WTC11 (cell line): ENCODE measurements at regions of chr6 and their contacts with region 1.

Region 1: DNA sequence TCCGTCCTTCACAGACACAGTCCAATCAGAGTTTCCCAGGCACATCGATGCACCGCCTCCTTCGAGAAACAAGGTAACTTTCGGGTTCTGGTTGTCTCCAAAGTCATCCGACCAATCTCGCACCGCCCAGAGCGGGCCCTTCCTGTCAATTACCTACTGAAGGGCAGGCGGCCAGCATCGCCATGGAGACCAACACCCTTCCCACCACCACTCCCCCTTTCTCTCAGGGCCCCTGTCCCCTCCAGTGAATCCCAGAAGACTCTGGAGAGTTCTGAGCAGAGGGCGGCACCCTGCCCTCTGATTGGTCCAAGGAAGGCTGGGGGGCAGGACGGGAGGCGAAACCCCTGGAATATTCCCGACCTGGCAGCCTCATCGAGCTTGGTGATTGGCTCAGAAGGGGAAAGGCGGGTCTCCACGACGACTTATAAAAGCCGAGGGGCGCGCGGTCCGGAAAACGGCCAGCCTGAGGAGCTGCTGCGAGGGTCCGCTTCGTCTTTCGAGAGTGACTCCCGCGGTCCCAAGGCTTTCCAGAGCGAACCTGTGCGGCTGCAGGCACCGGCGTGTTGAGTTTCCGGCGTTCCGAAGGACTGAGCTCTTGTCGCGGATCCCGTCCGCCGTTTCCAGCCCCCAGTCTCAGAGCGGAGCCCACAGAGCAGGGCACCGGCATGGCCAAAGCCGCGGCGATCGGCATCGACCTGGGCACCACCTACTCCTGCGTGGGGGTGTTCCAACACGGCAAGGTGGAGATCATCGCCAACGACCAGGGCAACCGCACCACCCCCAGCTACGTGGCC is at the start of gene HSPA1B:
- DNase-seq: peak; percentile 98
- ATAC-seq: peak; percentile 93
- H3K4me3 Mint-ChIP-seq: peak within 1 kb of the TSS; percentile 75
- H3K27ac Mint-ChIP-seq: peak within 1 kb of the TSS; percentile 99
- H3K4me1 Mint-ChIP-seq: peaks cover 44% of the 10 kb centered on the region
- H3K27me3 Mint-ChIP-seq: no peaks in the 10 kb centered on the region
- CTCF ChIP-seq: no peak
- total RNA-seq, gene HSPA1B: 75.3 to 105 TPM (median 96.4 TPM) in 3 replicates

Region 2: DNA sequence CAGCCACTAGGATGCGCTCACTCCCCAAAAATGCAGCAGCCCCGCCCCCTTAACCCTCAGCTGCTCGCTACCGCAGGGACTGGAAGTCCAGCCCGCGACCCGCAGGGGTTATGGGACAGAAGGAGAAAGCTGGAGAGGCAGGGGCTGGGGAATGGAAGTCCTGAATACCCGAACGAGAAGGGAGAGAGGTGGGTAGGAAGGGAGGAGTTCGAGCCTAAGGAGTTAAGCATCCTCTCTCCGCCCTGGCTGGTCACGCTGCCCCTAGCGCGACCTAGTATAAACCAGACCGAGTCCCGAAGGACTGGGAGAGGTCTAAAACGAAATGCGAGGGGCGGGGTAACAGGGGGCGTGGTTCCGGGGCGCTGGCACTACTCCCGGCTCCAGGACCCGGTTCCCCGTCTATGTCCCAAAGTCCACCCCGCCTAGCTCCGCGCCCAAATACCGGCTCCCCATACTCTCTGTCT is 97.9 kb before region 1 on chr6:
- CTCF ChIA-PET with region 1: interaction called, 16 read pairs
- POLR2A ChIA-PET with region 1: interaction called, 13 read pairs
- DNase-seq: peak; percentile 95
- ATAC-seq: peak; percentile 78
- H3K4me3 Mint-ChIP-seq: peak overlapping the region; percentile 93
- H3K27ac Mint-ChIP-seq: peak overlapping the region; percentile 99
- H3K4me1 Mint-ChIP-seq: peaks cover 21% of the 10 kb centered on the region
- H3K27me3 Mint-ChIP-seq: no peaks in the 10 kb centered on the region
- CTCF ChIP-seq: no peak; the same call in 1 of the 2 replicates

Region 3: DNA sequence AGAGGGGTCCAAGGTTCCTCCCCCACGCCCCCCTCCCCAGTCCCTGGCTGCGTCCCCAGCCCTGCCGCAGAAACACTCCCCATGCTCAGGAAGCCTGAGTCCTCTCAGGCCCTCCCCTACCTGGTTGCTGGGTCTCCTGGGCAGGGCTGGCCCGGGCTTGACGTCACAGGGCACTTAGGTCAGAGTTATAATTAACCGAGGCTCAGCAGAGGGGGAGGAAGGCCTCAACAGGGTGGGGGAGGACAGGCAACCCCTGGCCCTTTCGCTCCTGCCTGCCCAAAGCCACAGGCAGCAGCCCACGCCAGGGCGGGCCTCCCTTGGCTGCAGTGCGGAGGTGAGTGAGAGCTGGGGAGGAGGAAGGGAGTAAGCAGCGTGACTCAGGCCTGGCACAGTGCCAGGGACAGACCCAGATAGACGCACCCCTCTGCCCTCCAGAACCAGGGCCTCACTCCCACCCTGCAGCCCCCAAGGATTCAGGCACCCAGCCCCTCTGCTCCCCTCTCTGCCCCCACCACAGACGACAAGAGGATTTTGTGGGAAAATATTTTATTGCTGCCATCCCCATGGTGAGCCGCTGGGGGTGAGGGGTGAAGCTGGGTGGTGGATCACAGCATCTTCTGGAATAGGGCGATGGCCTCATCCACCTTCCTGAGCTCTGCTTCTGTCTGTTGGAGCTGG is 50.4 kb before region 1 on chr6 and contains the start of gene VWA7:
- CTCF ChIA-PET with region 1: interaction called, 16 read pairs
- POLR2A ChIA-PET with region 1: no interaction called
- DNase-seq: peak; percentile 35
- ATAC-seq: peak; percentile 44
- H3K4me3 Mint-ChIP-seq: no peak within 1 kb of the TSS
- H3K27ac Mint-ChIP-seq: peak within 1 kb of the TSS; percentile 68; the same call in 1 of the 2 replicates
- H3K4me1 Mint-ChIP-seq: 0 out of 2 replicates have a peak, but pooled peaks cover 2% of the 10 kb centered on the region
- H3K27me3 Mint-ChIP-seq: no peaks in the 10 kb centered on the region
- CTCF ChIP-seq: no peak
- total RNA-seq, gene VWA7: 1.2 to 1.8 TPM (median 1.4 TPM) in 3 replicates

Region 4: GRCh38 chr6:31806465-31807272 is 20.8 kb before region 1 on chr6 and contains the start of gene LSM2:
- CTCF ChIA-PET with region 1: interaction called, 10 read pairs
- POLR2A ChIA-PET with region 1: interaction called, 23 read pairs
- DNase-seq: peak; percentile 98
- ATAC-seq: peak; percentile 95
- H3K4me3 Mint-ChIP-seq: peak within 1 kb of the TSS; percentile 99
- H3K27ac Mint-ChIP-seq: peak within 1 kb of the TSS; percentile 99
- H3K4me1 Mint-ChIP-seq: peaks cover 9% of the 10 kb centered on the region
- H3K27me3 Mint-ChIP-seq: no peaks in the 10 kb centered on the region; the same call in 1 of the 2 replicates
- CTCF ChIP-seq: no peak
- total RNA-seq, gene LSM2: 104 to 121 TPM (median 119 TPM) in 3 replicates

Region 5: DNA sequence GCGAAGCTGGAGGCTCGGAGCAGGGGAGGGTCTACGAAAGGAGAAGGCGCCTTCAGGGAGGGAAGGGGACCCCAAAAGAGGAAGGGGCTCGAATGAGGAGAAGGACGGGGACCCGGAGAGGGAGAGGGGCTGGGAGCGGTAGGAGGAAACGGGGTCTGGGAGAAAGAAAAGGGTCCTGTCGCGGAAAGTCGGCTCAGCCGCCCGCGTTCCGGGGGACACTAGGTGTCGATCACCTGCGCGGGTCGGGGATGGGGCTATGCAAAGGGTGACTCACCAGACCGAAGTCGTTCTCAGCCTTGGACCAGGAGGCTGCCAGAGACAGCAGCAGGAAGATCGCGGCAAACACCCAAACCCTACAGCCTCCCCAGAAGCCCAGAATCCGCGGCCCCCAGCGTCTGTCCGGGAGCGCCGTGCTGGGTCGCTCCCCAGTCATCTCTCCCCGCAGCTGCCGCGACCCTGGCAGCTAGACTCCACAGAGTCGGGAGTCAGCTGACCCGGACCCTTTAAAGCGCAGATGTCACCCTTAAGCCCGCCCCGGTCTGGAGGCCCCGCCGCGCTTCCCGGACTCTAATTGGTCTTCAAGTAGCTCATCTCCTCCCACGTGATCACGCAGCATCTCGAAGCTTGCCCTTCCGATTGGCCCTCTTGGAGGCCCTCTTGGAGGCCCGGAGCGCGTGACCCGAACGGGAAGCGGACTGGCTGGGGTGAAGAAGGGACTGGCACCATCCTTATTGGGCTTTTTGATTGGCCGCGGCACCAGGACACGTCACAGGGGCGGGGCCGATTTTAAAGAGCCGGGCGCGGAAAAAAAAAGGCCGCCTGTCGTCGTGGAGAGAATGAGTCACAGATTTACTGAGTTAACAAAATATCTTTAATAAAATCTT is 35.1 kb after region 1 on chr6 and contains the start of gene NEU1:
- CTCF ChIA-PET with region 1: interaction called, 17 read pairs
- POLR2A ChIA-PET with region 1: interaction called, 13 read pairs
- DNase-seq: peak; percentile 99
- ATAC-seq: peak; percentile 93
- H3K4me3 Mint-ChIP-seq: peak within 1 kb of the TSS; percentile 97
- H3K27ac Mint-ChIP-seq: peak within 1 kb of the TSS; percentile 99
- H3K4me1 Mint-ChIP-seq: peaks cover 19% of the 10 kb centered on the region
- H3K27me3 Mint-ChIP-seq: peaks cover 2% of the 10 kb centered on the region; the same call in 1 of the 2 replicates
- CTCF ChIP-seq: no peak
- total RNA-seq, gene NEU1: 42.6 to 44.8 TPM (median 42.8 TPM) in 3 replicates

Region 6: GRCh38 chr6:31874084-31874670 is 46.7 kb after region 1 on chr6:
- CTCF ChIA-PET with region 1: no interaction called
- POLR2A ChIA-PET with region 1: no interaction called
- DNase-seq: no peak
- ATAC-seq: no peak
- H3K4me3 Mint-ChIP-seq: no peak overlapping the region
- H3K27ac Mint-ChIP-seq: 0 out of 2 replicates have a peak overlapping the region, but pooled peaks have one; percentile 57
- H3K4me1 Mint-ChIP-seq: peaks cover 12% of the 10 kb centered on the region
- H3K27me3 Mint-ChIP-seq: no peaks in the 10 kb centered on the region
- CTCF ChIP-seq: no peak